Dorsolateral prefrontal cortex (tissue), 120 donors: ENCODE measurements at regions of chr22 and their contacts with region 1.

Region 1: DNA sequence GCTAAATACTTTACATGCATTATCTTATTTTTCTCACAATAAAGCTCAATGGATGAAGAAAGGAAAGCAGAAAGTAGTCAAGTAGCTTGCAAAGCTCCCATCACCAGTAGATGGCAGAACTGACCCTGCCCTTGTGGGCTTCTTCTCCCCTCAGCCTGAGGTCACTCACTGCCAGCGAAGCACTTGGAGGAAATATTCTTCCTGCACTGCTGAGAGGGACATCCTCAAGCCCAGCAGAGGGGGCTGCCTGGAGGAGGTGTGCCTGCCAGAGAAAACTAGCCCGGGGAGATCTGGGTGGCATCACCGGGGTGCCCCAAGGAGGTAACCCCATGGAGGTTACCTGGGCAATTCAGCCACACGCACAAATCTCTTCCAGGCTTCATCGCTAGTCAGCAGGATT is 6.6 kb downstream of the APOL4 start:
- DNase-seq: peak in 7 of 10 donors; percentile 52 to 72 (median 63)
- H3K4me3 ChIP-seq: no peak overlapping the region
- H3K27ac ChIP-seq: no peak overlapping the region
- H3K27me3 ChIP-seq: no peaks in the 10 kb centered on the region
- CTCF ChIP-seq: peak in 55 of 56 donors; percentile 67 to 90 (median 82)

Region 2: GRCh38 chr22:35660291-35661127 is 534.5 kb before region 1 on chr22:
- intact Hi-C with region 1: no loop called
- DNase-seq: no peak
- H3K4me3 ChIP-seq: no peak overlapping the region
- H3K27ac ChIP-seq: no peak overlapping the region
- H3K27me3 ChIP-seq: no peaks in the 10 kb centered on the region
- CTCF ChIP-seq: no peak

Region 3: GRCh38 chr22:36144886-36145541 is 50.0 kb before region 1 on chr22:
- intact Hi-C with region 1: no loop called
- DNase-seq: peak in 8 of 10 donors; percentile 30 to 76 (median 67)
- H3K4me3 ChIP-seq: peak overlapping the region in 1 of 59 donors; percentile 31
- H3K27ac ChIP-seq: peak overlapping the region in 1 of 59 donors; percentile 21
- H3K27me3 ChIP-seq: no peaks in the 10 kb centered on the region
- CTCF ChIP-seq: peak; percentile 63 to 93 (median 85)

Region 4: GRCh38 chr22:36239401-36240171 is 44.6 kb after region 1 on chr22 and contains the start of gene APOL2:
- intact Hi-C with region 1: loop called (anchors 1 to 5 kb)
- DNase-seq: peak; percentile 77 to 96 (median 90)
- H3K4me3 ChIP-seq: peak within 1 kb of the TSS; percentile 49 to 84 (median 72)
- H3K27ac ChIP-seq: peak within 1 kb of the TSS; percentile 71 to 95 (median 89)
- H3K27me3 ChIP-seq: no peaks in the 10 kb centered on the region
- CTCF ChIP-seq: peak; percentile 48 to 90 (median 79)
- total RNA-seq, gene APOL2: 41.2 to 167 (median 101) TPM

Region 5: GRCh38 chr22:36277482-36278291 is 82.7 kb after region 1 on chr22:
- intact Hi-C with region 1: loop called in 1 of 2 experiments (anchors 2 kb)
- DNase-seq: peak in 6 of 10 donors; percentile 50 to 66 (median 56)
- H3K4me3 ChIP-seq: peak overlapping the region in 24 of 59 donors; percentile 5 to 47 (median 30)
- H3K27ac ChIP-seq: peak overlapping the region in 1 of 59 donors; percentile 21
- H3K27me3 ChIP-seq: no peaks in the 10 kb centered on the region
- CTCF ChIP-seq: peak; percentile 48 to 92 (median 81)

Region 6: GRCh38 chr22:36286471-36287224 is 91.7 kb after region 1 on chr22:
- intact Hi-C with region 1: loop called (anchors 1 to 5 kb)
- DNase-seq: peak; percentile 67 to 88 (median 81)
- H3K4me3 ChIP-seq: no peak overlapping the region
- H3K27ac ChIP-seq: peak overlapping the region in 45 of 59 donors; percentile 13 to 84 (median 63)
- H3K27me3 ChIP-seq: no peaks in the 10 kb centered on the region
- CTCF ChIP-seq: peak; percentile 85 to 99 (median 96)